Endothelial cell of umbilical vein (primary cell): ENCODE measurements at regions of chr2 and their contacts with region 1.

Region 1: DNA sequence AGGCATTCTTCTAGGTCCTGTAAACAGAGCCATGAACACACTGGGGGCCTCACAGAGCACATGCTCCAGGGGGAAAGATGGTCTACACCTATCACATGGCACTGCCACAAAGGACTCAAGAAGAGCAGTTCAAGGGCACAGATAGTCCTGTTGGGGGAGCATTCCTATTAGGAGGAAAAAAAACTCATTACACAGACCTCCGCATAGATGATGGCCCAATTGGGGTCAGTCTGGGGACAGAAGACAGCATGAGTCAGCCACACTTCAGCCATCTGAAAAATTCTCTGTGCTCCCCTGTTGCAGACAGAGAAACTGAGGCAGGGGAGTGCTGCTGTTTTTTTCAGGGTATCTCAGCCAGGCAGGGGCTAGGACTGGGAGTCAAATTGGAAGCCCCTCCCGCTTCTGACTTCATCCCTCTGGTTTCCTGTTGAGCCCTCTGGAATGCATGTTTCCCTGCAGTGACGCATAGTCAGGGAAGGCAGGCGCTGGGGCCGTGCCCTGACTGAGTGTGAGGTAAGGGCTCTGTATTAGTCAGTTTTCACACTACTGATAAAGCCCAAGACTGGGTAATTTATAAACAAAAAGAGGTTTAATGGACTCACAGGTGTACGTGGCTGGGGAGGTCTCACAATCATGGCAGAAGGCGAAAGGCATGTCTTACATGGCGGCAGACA is 67.9 kb downstream of the RHOB start:
- DNase-seq: peak; percentile 99
- H3K4me3 ChIP-seq: peak overlapping the region in 1 of 3 experiments; percentile 15
- H3K27ac ChIP-seq: peak overlapping the region; percentile 100
- H3K4me1 ChIP-seq: peaks cover 21% of the 10 kb centered on the region
- H3K27me3 ChIP-seq: no peaks in the 10 kb centered on the region
- CTCF ChIP-seq: no peak
- POLR2A ChIP-seq: no peak

Region 2: GRCh38 chr2:20568501-20569463 is 54.0 kb after region 1 on chr2:
- CTCF ChIA-PET with region 1: interaction called, 4 read pairs
- POLR2A ChIA-PET with region 1: no interaction called
- dilution Hi-C with region 1: no loop called
- intact Hi-C with region 1: loop called (anchors 1 kb)
- DNase-seq: peak; percentile 98
- H3K4me3 ChIP-seq: no peak overlapping the region
- H3K27ac ChIP-seq: peak overlapping the region; percentile 100
- H3K4me1 ChIP-seq: peaks cover 72% of the 10 kb centered on the region
- H3K27me3 ChIP-seq: no peaks in the 10 kb centered on the region
- CTCF ChIP-seq: no peak
- POLR2A ChIP-seq: peak; percentile 72

Region 3: GRCh38 chr2:20573620-20574422 is 59.1 kb after region 1 on chr2:
- CTCF ChIA-PET with region 1: interaction called, 4 read pairs
- POLR2A ChIA-PET with region 1: no interaction called
- dilution Hi-C with region 1: no loop called
- intact Hi-C with region 1: loop called (anchors 1 kb)
- DNase-seq: peak; percentile 98
- H3K4me3 ChIP-seq: no peak overlapping the region
- H3K27ac ChIP-seq: peak overlapping the region; percentile 100
- H3K4me1 ChIP-seq: peaks cover 98% of the 10 kb centered on the region
- H3K27me3 ChIP-seq: no peaks in the 10 kb centered on the region
- CTCF ChIP-seq: no peak
- POLR2A ChIP-seq: no peak